Activated naive CD4-positive, alpha-beta T cell treated with anti-CD3 and anti-CD28 coated beads for 36 hours (primary cell): ENCODE measurements at regions of chr5 and their contacts with region 1.

Region 1: DNA sequence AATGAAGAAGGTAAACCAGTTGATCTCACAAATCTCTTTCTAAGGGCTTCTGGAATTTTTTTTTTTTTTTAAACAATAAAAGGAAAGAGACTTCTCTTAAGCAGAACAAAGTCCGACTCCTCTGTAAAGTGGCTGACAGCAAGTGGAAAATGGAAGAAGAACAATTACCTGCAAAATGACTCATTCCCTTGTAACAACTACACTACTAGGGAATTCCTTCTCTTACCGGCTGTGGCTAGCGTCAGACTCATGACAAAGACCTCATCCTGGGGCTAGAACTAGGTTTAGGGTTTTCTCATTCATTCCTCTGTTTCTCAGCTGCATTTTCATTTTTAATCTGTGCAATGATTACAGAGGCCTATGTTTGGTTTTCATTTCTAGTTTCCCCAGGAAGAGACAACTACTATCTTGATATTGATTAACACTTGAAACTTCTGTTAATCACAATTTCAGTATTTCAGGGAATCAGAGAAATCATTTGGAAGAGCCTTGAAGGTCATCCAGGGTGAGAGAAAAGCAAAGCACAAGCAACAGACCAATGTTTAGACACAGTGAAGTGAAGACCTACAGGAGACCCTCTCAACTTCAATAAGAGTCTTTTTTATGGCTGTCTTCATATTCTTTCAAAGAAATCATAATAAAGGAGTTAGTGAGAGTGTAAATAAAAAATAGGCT is 437.9 kb downstream of the RAB3C start:
- DNase-seq: peak; percentile 76
- H3K4me3 Mint-ChIP-seq: peak overlapping the region; percentile 42
- H3K27ac Mint-ChIP-seq: peak overlapping the region; percentile 89
- H3K4me1 Mint-ChIP-seq: peaks cover 57% of the 10 kb centered on the region
- H3K27me3 Mint-ChIP-seq: no peaks in the 10 kb centered on the region

Region 2: DNA sequence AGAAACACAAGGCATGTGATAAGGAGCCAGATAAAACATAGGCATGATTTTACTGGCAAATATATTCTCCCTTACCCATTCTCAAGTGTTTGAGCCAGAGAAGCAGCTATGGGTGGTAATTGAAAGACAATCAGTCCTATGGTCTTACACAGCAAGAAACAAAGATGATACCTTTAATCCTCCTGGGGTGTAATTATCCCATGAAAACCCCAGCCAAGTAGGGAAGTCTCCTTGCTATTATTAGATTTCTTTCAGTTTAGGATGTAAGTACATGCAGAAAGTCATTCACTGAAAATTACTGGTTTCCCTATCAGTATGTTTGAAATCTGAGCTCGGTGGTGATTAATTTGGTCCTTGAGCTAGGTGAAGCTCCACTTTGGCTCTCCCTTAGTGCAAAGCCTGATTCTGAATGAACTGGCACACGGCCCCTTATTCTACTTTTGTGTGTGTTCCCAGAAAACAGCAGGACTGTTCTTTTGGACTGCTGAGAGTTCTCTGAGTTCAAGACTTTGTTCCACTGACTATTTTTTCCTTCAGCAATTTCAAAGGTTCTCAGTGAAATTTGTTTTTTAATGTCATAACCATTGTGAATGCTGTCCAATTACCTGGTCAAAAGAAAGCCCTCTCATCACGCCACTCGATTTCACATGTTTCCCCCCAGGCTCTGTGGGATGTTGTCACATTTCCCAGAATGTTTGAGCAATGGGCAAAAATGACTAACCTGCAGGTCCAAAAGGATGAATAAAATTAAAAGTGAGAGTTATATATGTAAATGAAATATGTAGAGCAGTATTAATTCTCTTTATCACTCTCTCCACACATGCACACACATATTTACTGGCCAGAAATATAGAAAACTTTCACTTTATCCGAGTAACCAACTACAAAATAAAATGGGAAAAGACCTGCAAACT is 94.9 kb before region 1 on chr5:
- CTCF ChIA-PET with region 1: no interaction called
- intact Hi-C with region 1: loop called (anchors 2 kb)
- DNase-seq: peak; percentile 43
- H3K4me3 Mint-ChIP-seq: peak overlapping the region; percentile 39
- H3K27ac Mint-ChIP-seq: peak overlapping the region; percentile 84
- H3K4me1 Mint-ChIP-seq: peaks cover 39% of the 10 kb centered on the region
- H3K27me3 Mint-ChIP-seq: peaks cover 2% of the 10 kb centered on the region

Region 3: GRCh38 chr5:58933891-58934628 is 86.7 kb before region 1 on chr5:
- CTCF ChIA-PET with region 1: no interaction called
- intact Hi-C with region 1: loop called (anchors 1 kb)
- DNase-seq: peak; percentile 76
- H3K4me3 Mint-ChIP-seq: peak overlapping the region; percentile 20
- H3K27ac Mint-ChIP-seq: peak overlapping the region; percentile 3
- H3K4me1 Mint-ChIP-seq: peaks cover 30% of the 10 kb centered on the region
- H3K27me3 Mint-ChIP-seq: no peaks in the 10 kb centered on the region

Region 4: GRCh38 chr5:59099270-59099994 is 78.7 kb after region 1 on chr5:
- CTCF ChIA-PET with region 1: no interaction called
- intact Hi-C with region 1: loop called (anchors 1 kb)
- DNase-seq: peak; percentile 68
- H3K4me3 Mint-ChIP-seq: no peak overlapping the region
- H3K27ac Mint-ChIP-seq: peak overlapping the region; percentile 20
- H3K4me1 Mint-ChIP-seq: peaks cover 32% of the 10 kb centered on the region
- H3K27me3 Mint-ChIP-seq: no peaks in the 10 kb centered on the region

Region 5: GRCh38 chr5:59367791-59368394 is 347.1 kb after region 1 on chr5:
- CTCF ChIA-PET with region 1: no interaction called
- intact Hi-C with region 1: loop called (anchors 5 kb)
- DNase-seq: peak; percentile 73
- H3K4me3 Mint-ChIP-seq: no peak overlapping the region
- H3K27ac Mint-ChIP-seq: no peak overlapping the region
- H3K4me1 Mint-ChIP-seq: peaks cover 5% of the 10 kb centered on the region
- H3K27me3 Mint-ChIP-seq: peaks cover 3% of the 10 kb centered on the region